ENCODE measurements at regions of chr4 and their contacts with region 1.

Region 1: GRCh38 chr4:52545099-52546069 is 113.7 kb downstream of the USP46 start:
- DNase-seq: peak; percentile 71
- H3K4me3 ChIP-seq: no peak overlapping the region
- H3K27ac ChIP-seq: no peak overlapping the region
- H3K4me1 ChIP-seq: no peaks in the 10 kb centered on the region
- H3K27me3 ChIP-seq: peaks cover 3 to 6% of the 10 kb centered on the region in 2 experiments
- CTCF ChIP-seq: peak; percentile 92 to 94
- POLR2A ChIP-seq: no peak

Region 2: GRCh38 chr4:52376132-52376704 is 169.2 kb before region 1 on chr4:
- CTCF ChIA-PET with region 1: interaction called, 13 read pairs
- POLR2A ChIA-PET with region 1: no interaction called
- dilution Hi-C with region 1: no loop called
- intact Hi-C with region 1: loop called (anchors 5 kb)
- DNase-seq: peak; percentile 51
- H3K4me3 ChIP-seq: no peak overlapping the region
- H3K27ac ChIP-seq: no peak overlapping the region
- H3K4me1 ChIP-seq: no peaks in the 10 kb centered on the region
- H3K27me3 ChIP-seq: peaks cover 0 to 3% of the 10 kb centered on the region in 2 experiments
- CTCF ChIP-seq: peak; percentile 33
- POLR2A ChIP-seq: no peak

Region 3: DNA sequence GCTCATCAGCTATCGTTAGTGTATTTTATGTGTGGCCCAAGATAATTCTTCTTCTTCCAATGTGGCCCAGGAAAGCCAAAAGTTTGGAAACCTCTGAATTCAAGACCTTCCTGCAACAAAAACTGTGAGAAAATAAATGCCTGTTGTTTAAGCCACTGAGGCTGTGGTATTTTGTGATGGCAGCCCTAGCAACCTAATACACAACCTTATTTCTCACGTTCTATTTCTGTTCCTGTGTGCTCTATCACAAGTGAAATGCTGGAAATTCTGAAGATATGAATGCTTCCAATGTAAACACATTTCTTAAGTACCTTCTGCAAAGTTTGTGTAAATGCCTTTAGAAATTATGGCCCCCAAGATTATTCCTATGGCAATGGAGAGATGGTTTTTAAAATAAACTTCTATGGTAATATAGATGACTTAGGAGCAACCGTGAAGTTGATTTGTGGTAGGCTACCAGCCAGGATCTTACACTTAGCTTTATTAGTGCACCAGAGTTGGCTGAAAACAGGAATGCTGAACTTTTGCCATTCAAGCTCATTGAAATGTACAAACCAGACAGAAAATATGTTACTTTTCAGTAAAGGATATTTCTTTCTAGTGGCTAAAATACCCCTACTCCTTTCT is 34.3 kb before region 1 on chr4:
- CTCF ChIA-PET with region 1: no interaction called
- POLR2A ChIA-PET with region 1: no interaction called
- dilution Hi-C with region 1: no loop called
- intact Hi-C with region 1: no loop called
- DNase-seq: no peak
- H3K4me3 ChIP-seq: no peak overlapping the region
- H3K27ac ChIP-seq: no peak overlapping the region
- H3K4me1 ChIP-seq: no peaks in the 10 kb centered on the region
- H3K27me3 ChIP-seq: no peaks in the 10 kb centered on the region
- CTCF ChIP-seq: no peak
- POLR2A ChIP-seq: no peak

Region 4: GRCh38 chr4:52659001-52659721 is 113.8 kb after region 1 on chr4 and contains the start of gene USP46:
- CTCF ChIA-PET with region 1: interaction called, 38 read pairs
- POLR2A ChIA-PET with region 1: no interaction called
- dilution Hi-C with region 1: no loop called
- intact Hi-C with region 1: loop called (anchors 2 kb)
- DNase-seq: peak; percentile 66
- H3K4me3 ChIP-seq: peak within 1 kb of the TSS; percentile 80 to 90 (median 88)
- H3K27ac ChIP-seq: peak within 1 kb of the TSS; percentile 86
- H3K4me1 ChIP-seq: peaks cover 13% of the 10 kb centered on the region
- H3K27me3 ChIP-seq: no peaks in the 10 kb centered on the region
- CTCF ChIP-seq: no peak
- POLR2A ChIP-seq: peak; percentile 85
- total RNA-seq, gene USP46: 23.3 and 23.7 TPM in 2 replicates

Region 5: DNA sequence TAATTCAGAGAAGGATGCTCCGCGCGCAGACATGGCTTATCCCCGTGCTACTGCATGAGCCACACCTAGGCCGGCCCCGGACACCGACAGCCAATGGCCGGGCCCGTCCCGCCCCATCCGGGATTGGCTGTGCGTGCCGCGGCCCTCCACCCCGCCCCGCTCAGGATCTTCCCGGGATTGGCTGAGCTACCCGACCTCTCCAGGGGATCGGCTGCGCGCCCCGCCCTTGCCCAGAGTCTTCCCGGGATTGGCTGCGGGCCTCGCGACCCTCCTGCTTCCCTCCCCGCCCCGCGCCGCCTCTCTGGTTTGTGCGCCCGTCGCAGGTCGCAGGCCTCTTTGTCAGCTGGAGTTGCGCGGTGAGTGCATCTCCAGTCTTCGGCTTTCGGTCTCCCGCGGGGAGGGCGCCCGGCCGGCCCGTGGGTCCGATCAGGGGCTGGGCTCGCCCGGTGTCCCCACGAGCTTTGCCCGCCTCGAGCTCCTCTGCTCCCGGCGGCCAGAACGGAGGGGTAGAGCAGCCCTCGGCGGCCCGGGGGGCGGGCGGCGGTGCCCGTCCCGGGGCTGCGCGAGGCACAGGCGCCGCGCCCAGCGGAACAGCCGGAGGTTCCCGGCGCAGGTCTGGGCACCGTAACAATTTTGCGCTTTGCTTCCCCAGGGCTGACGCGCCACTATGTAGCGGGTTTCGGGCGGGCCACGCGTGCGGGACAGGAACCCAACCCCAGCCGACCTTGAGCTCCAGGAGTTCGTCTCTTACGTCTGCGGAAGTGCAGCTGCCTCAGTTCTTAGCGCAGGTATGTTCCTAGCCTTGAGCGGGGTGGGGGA is 167.0 kb after region 1 on chr4:
- CTCF ChIA-PET with region 1: interaction called, 16 read pairs
- POLR2A ChIA-PET with region 1: no interaction called
- dilution Hi-C with region 1: no loop called
- intact Hi-C with region 1: loop called (anchors 2 kb)
- DNase-seq: peak; percentile 97
- H3K4me3 ChIP-seq: peak overlapping the region; percentile 61 to 86 (median 76)
- H3K27ac ChIP-seq: peak overlapping the region; percentile 73
- H3K4me1 ChIP-seq: peaks cover 30% of the 10 kb centered on the region
- H3K27me3 ChIP-seq: peaks cover 0 to 5% of the 10 kb centered on the region in 2 experiments
- CTCF ChIP-seq: no peak
- POLR2A ChIP-seq: peak; percentile 97

Region 6: DNA sequence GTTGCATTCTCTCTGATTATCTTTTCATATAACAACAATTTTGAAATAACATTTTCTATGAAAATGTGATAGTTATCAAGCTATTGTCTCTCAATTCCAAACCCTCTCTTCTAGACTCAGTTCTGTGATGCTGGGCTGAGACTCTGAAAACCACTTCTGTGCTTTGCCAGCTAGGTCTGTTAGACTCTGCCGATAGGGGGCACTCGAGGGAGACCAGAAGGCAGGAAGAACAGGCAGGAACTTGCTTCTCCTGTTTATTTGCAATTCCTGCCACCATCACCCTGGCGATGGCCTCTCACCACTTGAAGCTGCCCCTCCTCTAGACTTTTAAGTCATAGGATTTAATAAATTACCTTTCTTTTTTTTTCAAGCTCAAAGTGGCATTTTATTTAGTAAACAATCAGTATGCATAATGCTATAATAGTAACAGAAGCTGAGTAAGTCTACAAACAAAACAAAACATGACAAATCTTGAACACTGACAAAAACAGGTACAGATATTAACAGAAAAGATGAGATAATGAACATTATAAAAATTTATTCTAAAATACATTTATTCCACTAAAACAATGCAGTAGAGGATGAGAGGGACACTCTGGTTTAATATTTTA is 366.4 kb after region 1 on chr4:
- CTCF ChIA-PET with region 1: interaction called, 6 read pairs
- POLR2A ChIA-PET with region 1: no interaction called
- dilution Hi-C with region 1: no loop called
- intact Hi-C with region 1: loop called (anchors 2 kb)
- DNase-seq: peak; percentile 76
- H3K4me3 ChIP-seq: no peak overlapping the region
- H3K27ac ChIP-seq: no peak overlapping the region
- H3K4me1 ChIP-seq: no peaks in the 10 kb centered on the region
- H3K27me3 ChIP-seq: no peaks in the 10 kb centered on the region
- CTCF ChIP-seq: peak; percentile 85 to 89
- POLR2A ChIP-seq: no peak

Region 7: DNA sequence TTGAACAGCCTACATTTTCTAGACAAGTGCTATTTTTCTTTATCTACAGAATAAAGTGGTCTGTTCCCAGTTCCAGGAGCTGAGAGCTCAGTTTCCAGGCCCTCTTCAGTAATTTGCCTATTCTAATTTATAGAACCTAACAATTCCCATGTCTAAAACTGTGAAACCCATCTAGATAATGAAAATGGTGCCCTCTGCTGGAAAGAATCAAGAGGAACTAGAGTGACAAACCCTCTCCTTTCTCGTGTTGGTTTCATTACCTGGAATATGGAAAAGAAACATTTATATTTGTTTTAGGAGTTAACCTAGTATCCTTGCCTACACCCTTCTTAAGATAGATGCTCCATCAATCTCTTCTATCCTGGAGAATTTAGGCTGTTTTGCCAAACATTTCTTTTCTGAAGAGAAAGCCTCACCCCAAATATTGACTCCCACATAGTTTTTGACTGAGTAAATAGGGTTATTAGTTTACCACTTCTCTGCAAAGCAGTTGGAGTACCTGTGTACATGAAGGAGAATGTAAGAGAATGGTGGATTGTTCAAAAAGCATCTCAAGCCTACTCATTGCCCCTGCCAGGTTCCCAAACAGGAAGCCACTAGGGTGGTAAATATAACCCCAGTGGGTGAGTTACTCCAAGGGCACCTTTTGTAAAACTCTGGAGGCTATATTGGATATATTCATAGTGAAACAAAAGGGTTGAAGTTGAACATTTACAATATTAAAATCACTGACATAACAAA is 438.3 kb after region 1 on chr4:
- CTCF ChIA-PET with region 1: interaction called, 238 read pairs
- POLR2A ChIA-PET with region 1: no interaction called
- dilution Hi-C with region 1: no loop called
- intact Hi-C with region 1: loop called (anchors 2 kb)
- DNase-seq: peak; percentile 64
- H3K4me3 ChIP-seq: no peak overlapping the region
- H3K27ac ChIP-seq: no peak overlapping the region
- H3K4me1 ChIP-seq: no peaks in the 10 kb centered on the region
- H3K27me3 ChIP-seq: no peaks in the 10 kb centered on the region
- CTCF ChIP-seq: peak; percentile 38 to 44
- POLR2A ChIP-seq: no peak

Measured in endothelial cell of umbilical vein (primary cell).